ENCODE measurements at regions of chr10 and their contacts with region 1.

Region 1: GRCh38 chr10:21495752-21496342 is 29.6 kb downstream of the SKIDA1 start:
- DNase-seq: peak; percentile 54 to 83
- ATAC-seq: peak; percentile 86

Region 2: DNA sequence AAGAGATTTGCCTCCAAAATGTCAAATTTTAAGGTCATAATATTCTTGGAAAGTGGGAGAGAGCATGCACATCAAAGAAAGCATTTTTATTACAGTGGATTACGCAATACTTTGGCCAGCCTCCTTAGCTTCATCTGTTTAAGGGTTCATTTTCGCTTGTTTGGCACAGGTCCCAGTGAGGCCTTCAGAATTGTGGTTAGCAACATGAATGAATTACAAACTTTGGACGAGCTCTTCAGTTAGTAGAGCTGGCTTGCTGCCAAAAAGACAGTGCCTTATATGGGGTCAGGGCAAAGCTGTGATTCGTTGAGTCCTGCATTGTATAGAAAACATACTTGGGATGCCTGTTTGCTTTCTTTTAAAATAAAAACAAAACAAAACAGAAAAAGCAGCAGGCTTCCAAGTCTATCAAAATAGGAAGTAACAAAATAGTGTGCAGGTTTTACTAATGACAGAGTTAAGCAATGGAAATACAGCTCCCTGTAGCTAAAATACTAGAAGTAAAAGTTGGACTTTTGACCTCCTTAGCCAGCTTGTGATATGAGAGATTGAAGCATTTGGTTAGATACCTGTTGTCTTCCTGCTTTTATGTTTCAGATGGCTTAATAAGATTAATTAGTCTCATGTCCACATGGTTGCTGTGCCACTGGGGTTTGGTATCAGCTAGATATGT is 229.0 kb after region 1 on chr10:
- intact Hi-C with region 1: loop called in 1 of 2 experiments (anchors 5 kb)
- DNase-seq: peak; percentile 91 to 94
- ATAC-seq: peak; percentile 82

Region 3: GRCh38 chr10:21953585-21954057 is 457.8 kb after region 1 on chr10:
- intact Hi-C with region 1: loop called in 1 of 2 experiments (anchors 10 kb)
- DNase-seq: no peak
- ATAC-seq: peak; percentile 55

Region 4: GRCh38 chr10:22988581-22989360 is 1492.9 kb after region 1 on chr10:
- intact Hi-C with region 1: loop called in 1 of 2 experiments (anchors 10 kb)
- DNase-seq: peak in 1 of 2 donors; percentile 53
- ATAC-seq: peak; percentile 66